ENCODE measurements at regions of chr12 and their contacts with region 1.

Region 1: DNA sequence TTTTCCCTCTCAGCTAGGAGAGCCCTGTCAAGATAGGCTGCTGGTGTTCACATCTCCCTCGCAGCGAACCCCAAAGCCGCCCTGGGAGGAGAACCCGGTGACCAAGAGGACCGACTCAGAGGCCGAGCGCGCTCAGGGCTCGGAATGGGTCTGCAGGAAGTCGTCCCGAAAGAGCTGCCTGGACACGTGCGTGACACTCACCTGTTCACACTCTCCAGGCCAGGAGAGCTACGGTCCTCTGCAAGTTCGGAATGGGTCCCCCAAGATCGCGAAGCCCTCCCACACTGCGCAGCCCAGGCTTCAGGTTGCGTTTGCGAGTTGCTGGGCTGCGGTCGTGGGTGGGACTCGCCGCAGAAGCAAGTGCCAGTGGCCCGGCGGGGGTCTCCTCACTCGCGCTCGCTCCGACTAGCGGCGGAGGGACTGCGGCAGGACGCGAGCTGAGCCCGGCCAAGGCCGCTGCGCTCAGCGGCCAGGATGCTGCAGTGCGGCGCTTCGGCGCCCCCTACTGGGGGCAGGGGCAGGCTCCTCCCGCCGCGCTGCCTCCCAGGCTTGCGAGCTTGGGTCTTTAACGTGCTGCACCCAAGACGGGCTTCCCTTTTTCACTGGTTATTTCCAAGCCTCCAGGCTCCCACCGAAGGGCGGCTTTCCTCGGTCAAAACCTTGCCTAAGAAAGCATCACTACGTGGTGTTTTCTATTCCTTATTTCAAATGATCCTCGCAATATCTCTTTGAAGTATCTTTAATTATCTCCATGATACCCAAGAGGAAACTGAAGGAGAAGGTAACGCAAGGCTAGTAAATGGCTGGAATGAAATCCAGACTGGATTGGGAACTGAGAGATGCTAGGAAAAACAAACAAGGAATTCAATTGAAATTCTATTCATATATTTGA is at the start of gene RERG:
- DNase-seq: peak; percentile 34
- H3K4me3 ChIP-seq: peak within 1 kb of the TSS; percentile 56
- H3K27ac ChIP-seq: no peak within 1 kb of the TSS
- H3K27me3 ChIP-seq: no peaks in the 10 kb centered on the region
- CTCF ChIP-seq: peak; percentile 91
- polyA plus RNA-seq, gene RERG: 0.12 and 0.16 TPM in 2 replicates

Region 2: GRCh38 chr12:14995583-14996425 is 225.4 kb before region 1 on chr12:
- CTCF ChIA-PET with region 1: interaction called, 13 read pairs
- POLR2A ChIA-PET with region 1: no interaction called
- DNase-seq: peak; percentile 55
- H3K4me3 ChIP-seq: no peak overlapping the region
- H3K27ac ChIP-seq: no peak overlapping the region
- H3K27me3 ChIP-seq: no peaks in the 10 kb centered on the region
- CTCF ChIP-seq: peak; percentile 67

Region 3: DNA sequence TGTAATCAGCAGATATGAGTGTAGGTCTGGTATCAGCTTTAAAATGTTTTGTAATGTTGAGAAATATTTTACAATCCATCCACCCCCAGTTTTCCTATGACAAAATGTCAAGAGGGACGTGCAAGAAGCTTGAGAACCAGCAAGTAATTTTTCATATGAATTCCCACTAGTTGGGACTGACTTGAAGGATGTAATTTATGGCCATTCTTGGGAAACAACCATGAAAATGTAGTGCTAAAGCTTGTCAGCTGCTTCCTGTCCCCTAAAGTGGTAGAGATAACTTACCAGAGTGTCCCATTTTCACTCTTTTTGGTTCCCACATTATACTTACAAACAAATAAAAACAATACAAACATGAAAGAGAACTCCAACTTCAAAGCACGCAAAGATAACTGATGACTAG is 64.0 kb before region 1 on chr12:
- CTCF ChIA-PET with region 1: interaction called, 30 read pairs
- POLR2A ChIA-PET with region 1: no interaction called
- DNase-seq: no peak
- H3K4me3 ChIP-seq: no peak overlapping the region
- H3K27ac ChIP-seq: no peak overlapping the region
- H3K27me3 ChIP-seq: no peaks in the 10 kb centered on the region
- CTCF ChIP-seq: no peak

Region 4: DNA sequence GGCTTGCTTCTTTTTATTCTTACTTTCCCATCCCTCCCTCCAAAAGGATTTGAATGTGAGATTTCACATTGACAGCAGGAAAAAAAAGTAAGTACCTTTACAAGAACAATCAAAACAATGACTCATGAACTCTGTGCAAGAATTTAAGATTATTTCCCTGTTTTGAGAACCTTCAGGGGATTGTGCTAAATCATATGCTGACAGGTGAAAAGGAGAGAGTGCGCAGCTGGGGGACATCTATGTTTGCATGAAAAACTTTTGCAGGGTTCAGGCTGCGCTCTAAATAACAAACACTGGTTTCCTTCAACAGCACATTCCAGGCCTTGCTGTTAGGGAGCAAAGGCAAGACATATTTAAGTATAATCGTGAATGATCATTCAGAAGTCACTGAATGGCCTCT is 27.3 kb before region 1 on chr12:
- CTCF ChIA-PET with region 1: interaction called, 11 read pairs
- POLR2A ChIA-PET with region 1: no interaction called
- DNase-seq: no peak
- H3K4me3 ChIP-seq: no peak overlapping the region
- H3K27ac ChIP-seq: no peak overlapping the region
- H3K27me3 ChIP-seq: no peaks in the 10 kb centered on the region
- CTCF ChIP-seq: no peak

Region 5: DNA sequence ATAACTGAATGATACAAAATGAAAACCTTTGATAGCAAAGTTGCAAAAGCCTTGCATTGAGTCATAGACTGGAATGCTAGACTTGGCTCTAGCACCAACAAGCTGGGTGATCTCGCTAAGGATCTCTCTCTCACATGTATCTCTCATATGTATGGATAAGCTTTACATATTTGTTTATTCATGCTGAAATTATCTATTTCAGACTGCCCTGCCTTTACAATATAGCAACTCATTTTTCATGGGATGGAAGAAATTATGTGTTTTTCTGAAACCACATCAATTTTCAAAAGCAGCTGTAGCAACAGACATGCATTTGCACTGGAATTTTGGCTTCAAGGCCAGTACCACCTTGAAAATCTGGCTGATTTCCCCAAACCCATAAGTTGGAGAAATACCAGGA is 11.5 kb before region 1 on chr12:
- CTCF ChIA-PET with region 1: interaction called, 34 read pairs
- POLR2A ChIA-PET with region 1: no interaction called
- DNase-seq: no peak
- H3K4me3 ChIP-seq: no peak overlapping the region
- H3K27ac ChIP-seq: no peak overlapping the region
- H3K27me3 ChIP-seq: no peaks in the 10 kb centered on the region
- CTCF ChIP-seq: no peak

Region 6: DNA sequence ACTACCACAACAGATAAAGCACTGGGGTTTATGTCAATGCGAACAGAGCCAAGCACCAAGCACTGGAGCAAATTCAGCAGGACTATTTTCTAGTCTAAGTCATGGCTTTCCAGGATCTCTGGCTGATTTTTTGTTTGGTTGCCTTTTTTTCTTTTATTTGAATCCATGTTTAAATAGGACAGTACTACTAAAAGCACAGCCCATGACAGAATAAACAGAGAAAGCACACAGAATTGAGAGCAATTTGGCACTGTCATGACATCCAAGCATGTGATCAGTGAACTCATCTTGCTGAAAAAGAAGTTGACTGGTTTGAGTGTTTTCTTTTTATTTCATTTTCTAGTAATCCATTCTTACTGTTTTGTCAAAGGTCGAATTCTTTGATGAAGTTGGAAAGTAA is 23.1 kb after region 1 on chr12:
- CTCF ChIA-PET with region 1: interaction called, 12 read pairs
- POLR2A ChIA-PET with region 1: no interaction called
- DNase-seq: no peak
- H3K4me3 ChIP-seq: no peak overlapping the region
- H3K27ac ChIP-seq: no peak overlapping the region
- H3K27me3 ChIP-seq: no peaks in the 10 kb centered on the region
- CTCF ChIP-seq: no peak